ENCODE measurements at regions of chr5 and their contacts with region 1.

Region 1: DNA sequence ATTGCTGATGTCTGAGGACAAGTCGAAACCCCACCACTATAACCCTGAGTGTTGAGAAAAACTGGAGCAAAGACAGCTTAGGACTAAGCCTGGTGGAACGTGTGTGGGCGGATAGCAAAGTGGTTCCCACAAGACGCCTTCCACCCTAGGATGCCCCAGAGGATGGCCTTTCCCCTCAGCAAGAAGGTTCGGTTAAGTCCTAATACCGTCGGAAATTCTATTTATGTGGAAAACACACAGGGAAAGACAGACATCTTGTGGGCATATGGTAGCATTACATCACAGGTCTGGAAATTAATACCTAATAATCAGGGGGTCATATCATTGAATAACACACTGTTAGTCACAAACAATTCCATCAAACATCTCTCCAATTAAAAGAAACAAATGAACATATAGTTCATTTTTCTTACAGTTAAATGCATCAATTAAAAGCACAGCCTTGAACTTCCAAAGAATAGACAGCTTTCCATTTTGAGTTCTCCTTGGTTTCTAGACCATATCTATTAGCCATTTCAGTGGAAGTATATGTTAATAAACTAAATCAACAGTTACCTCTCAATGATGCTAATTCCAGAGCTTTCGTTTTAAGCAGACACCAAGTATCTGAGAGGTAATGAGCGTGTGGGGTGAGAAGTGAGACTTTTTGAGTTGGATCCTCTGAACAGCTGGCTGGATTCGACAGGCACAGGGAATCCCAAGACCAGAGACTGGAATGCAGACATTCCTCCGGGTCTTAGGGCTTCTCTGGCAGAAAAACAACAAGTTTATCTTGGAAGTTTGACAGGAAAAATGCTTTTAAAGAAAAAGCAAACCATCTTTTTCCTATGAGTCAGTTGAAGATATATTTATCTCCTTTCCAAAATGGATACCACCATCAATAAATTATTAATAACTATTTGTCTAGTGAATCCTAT is 2.9 kb upstream of the ICE1 start:
- DNase-seq: no peak
- ATAC-seq: no peak
- H3K4me3 ChIP-seq: no peak overlapping the region
- H3K27ac ChIP-seq: no peak overlapping the region
- H3K4me1 ChIP-seq: peaks cover 0 to 26% (median 10%) of the 10 kb centered on the region in 4 donors
- H3K27me3 ChIP-seq: no peaks in the 10 kb centered on the region
- CTCF ChIP-seq: peak; percentile 61 to 74 (median 65)
- POLR2A ChIP-seq: no peak

Region 2: GRCh38 chr5:4879693-4880303 is 539.8 kb before region 1 on chr5:
- intact Hi-C with region 1: loop called in 1 of 2 experiments (anchors 10 kb)
- DNase-seq: peak; percentile 67 to 83 (median 76)
- ATAC-seq: peak; percentile 95 to 100 (median 98)
- H3K4me3 ChIP-seq: no peak overlapping the region
- H3K27ac ChIP-seq: no peak overlapping the region
- H3K4me1 ChIP-seq: no peaks in the 10 kb centered on the region
- H3K27me3 ChIP-seq: no peaks in the 10 kb centered on the region
- CTCF ChIP-seq: peak; percentile 91 to 94 (median 92)
- POLR2A ChIP-seq: no peak

Region 3: DNA sequence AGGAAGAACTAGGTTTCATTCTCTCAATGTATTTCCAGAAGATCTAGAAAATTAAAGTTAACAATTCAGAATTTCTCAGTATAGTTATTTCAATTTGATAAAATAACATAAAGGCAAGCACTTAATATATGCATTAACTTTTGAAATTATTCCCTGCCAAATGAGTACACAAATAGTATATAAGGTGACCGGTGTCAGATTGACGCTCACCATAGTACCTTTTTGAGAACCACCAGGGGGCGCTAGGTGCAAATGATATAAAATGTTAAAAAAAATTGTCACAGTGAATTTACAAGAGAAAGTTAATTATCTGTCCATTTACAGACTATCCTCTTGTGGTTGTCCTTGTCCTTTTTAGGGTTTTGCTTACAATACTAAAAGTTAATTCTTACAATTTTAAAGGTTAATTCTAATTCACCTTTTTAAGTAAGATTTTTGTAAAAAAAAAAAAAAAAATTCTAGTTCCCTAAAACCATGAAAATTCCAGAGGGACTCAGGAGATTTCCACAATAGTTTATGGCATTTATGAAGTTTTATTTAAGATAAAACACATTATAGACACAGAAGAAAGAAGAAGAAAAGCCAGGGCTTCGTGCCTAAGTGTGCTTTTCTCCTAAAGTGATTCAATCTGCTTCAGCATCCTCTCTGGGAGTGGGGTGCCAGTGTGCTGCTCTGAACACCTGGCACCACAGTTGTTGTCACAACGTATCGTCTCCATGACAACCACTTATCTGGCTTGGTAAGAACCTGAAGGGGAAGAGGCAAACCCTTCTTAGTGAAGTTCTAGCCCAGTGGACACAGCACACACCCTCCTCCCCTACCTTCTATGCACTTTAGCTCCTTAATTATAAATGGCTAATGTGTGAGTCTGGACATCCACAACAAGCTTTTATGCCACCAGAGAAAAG is 277.7 kb before region 1 on chr5:
- intact Hi-C with region 1: loop called in 1 of 2 experiments (anchors 10 kb)
- DNase-seq: no peak
- ATAC-seq: peak; percentile 54 to 76 (median 74)
- H3K4me3 ChIP-seq: no peak overlapping the region
- H3K27ac ChIP-seq: no peak overlapping the region
- H3K4me1 ChIP-seq: peaks cover 0 to 22% (median 2%) of the 10 kb centered on the region in 4 donors
- H3K27me3 ChIP-seq: peaks cover 0 to 5% of the 10 kb centered on the region in 2 donors
- CTCF ChIP-seq: peak; percentile 79 to 87 (median 81)
- POLR2A ChIP-seq: no peak